ENCODE measurements at regions of chr14 and their contacts with region 1.

Region 1: DNA sequence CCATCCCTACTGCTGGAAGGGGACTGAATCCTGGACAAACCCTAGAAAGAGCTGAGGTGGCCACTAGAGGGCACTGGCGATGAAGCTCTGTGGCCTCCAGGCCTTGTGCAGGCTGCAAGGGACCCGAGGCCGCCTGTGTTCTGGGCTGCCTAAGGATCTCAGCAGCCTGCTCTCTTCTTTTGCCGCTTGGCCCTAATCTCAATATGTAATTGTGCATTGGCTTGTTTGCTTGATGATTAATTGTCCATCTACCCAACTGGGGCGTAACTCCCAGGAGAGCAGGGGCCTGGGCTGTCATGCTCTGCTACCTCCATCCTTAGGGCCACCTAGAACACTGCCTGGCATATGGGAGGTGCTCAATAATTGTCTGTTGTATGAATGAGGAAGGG is 73.8 kb downstream of the SYNE3 start:
- DNase-seq: peak; percentile 90 to 92
- ATAC-seq: peak; percentile 93
- H3K4me3 ChIP-seq: no peak overlapping the region
- H3K27ac ChIP-seq: no peak overlapping the region
- H3K4me1 ChIP-seq: no peaks in the 10 kb centered on the region
- H3K27me3 ChIP-seq: no peaks in the 10 kb centered on the region

Region 2: DNA sequence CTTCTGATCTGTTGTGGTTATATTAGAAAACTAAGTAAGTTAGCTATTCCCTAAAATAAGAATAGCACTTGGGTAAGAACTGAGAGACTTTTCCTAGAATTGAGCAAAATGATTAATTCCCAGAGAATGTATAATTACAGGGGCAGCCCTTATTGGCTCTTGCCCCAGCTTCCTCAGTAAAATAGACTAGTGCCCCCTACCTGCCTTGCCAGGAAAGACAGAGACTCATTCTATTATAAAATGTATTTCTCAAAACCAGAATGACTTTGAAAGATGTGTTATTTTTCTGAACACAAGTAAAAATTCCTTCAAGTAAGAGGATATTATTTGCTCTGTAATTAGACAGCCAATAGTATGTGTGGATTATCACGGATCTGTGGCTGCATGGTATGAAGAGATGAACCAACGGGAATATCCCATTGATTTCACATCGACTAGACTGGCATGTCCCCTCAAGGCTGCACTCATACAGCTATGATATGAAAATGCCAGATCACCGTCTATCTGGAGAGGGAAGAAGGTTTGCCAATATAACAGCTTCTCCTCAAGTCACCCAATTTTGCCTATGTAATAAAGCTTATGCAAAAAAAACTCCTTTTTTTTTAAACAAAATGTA is 84.9 kb after region 1 on chr14:
- intact Hi-C with region 1: loop called (anchors 1 to 2 kb)
- DNase-seq: peak in 1 of 2 donors; percentile 68
- ATAC-seq: peak; percentile 90
- H3K4me3 ChIP-seq: no peak overlapping the region
- H3K27ac ChIP-seq: peak overlapping the region in 1 of 2 donors; percentile 60
- H3K4me1 ChIP-seq: peaks cover 0 to 13% of the 10 kb centered on the region in 2 donors
- H3K27me3 ChIP-seq: no peaks in the 10 kb centered on the region

Region 3: GRCh38 chr14:95814363-95815225 is 372.0 kb after region 1 on chr14:
- intact Hi-C with region 1: no loop called
- DNase-seq: no peak
- ATAC-seq: no peak
- H3K4me3 ChIP-seq: no peak overlapping the region
- H3K27ac ChIP-seq: no peak overlapping the region
- H3K4me1 ChIP-seq: no peaks in the 10 kb centered on the region
- H3K27me3 ChIP-seq: no peaks in the 10 kb centered on the region